ENCODE measurements at regions of chr1 and their contacts with region 1.

Region 1: GRCh38 chr1:179025125-179025974 is at the start of gene FAM20B:
- DNase-seq: peak; percentile 90
- ATAC-seq: peak; percentile 84
- H3K4me3 Mint-ChIP-seq: peak within 1 kb of the TSS; percentile 90
- H3K27ac Mint-ChIP-seq: peak within 1 kb of the TSS; percentile 90
- H3K4me1 Mint-ChIP-seq: peaks cover 43% of the 10 kb centered on the region
- H3K27me3 Mint-ChIP-seq: no peaks in the 10 kb centered on the region
- CTCF ChIP-seq: no peak
- total RNA-seq, gene FAM20B: 26.3 and 27.5 TPM in 2 replicates

Region 2: GRCh38 chr1:178093205-178093957 is 932.0 kb before region 1 on chr1:
- CTCF ChIA-PET with region 1: no interaction called
- POLR2A ChIA-PET with region 1: no interaction called
- intact Hi-C with region 1: loop called (anchors 5 kb)
- DNase-seq: peak; percentile 54
- ATAC-seq: peak; percentile 87
- H3K4me3 Mint-ChIP-seq: peak overlapping the region; percentile 83
- H3K27ac Mint-ChIP-seq: no peak overlapping the region
- H3K4me1 Mint-ChIP-seq: peaks cover 16% of the 10 kb centered on the region
- H3K27me3 Mint-ChIP-seq: peaks cover 70% of the 10 kb centered on the region
- CTCF ChIP-seq: no peak

Region 3: DNA sequence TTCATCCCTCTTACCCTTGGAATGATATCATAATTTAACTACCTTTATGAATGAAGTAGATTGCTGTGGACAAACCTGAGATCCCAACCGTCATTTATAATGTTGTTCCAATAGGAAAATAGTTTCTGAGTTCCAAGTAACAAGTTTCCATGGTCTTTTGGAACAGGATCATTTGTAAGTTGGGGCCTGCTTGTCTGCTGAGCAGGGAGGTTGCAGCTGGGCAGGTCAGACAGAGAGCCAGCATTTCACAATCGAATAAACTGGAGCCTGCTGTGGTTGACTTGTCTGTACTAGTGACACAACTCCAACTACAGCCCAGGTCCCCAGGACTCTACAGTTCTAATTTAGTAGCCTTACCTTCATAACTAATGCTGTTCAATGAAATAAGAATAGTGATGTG is 318.9 kb before region 1 on chr1:
- CTCF ChIA-PET with region 1: no interaction called
- POLR2A ChIA-PET with region 1: no interaction called
- intact Hi-C with region 1: no loop called
- DNase-seq: no peak
- ATAC-seq: no peak
- H3K4me3 Mint-ChIP-seq: no peak overlapping the region
- H3K27ac Mint-ChIP-seq: no peak overlapping the region
- H3K4me1 Mint-ChIP-seq: peaks cover 49% of the 10 kb centered on the region
- H3K27me3 Mint-ChIP-seq: no peaks in the 10 kb centered on the region
- CTCF ChIP-seq: no peak

Region 4: DNA sequence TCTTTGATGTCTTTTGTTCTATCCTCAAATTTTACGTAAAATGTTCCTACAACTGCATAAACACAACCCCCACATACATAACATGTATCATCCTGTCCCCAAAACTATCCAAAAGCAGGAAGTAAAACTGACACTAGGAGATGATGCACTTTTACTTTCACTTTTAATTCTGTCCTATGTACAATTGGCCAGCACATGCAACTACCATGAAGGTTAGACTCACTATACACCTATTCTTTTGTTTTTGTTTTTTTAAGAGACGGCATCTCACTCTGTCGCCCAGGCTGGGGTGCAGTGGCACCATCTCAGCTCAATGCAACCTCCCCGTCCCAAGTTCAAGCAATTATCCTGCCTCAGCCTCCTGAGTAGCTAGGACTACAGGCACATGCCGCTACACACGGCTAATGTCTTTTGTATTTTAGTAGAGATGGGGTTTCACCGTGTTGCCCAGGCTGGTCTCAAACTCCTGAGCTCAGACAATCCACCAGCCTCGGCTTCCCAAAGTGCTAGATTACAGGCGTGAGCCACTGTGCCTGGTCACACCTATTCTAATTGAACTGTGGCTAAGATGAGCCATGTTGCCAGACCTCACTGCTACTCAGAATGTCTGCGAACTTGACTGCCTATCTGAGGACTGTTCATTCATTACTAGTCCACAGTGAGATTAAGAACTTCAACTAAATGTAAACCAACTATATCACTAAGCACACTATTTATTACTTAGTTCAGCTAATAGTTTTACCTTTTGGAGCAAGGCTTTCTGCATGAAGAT is 104.5 kb after region 1 on chr1:
- CTCF ChIA-PET with region 1: no interaction called
- POLR2A ChIA-PET with region 1: no interaction called
- intact Hi-C with region 1: loop called (anchors 2 kb)
- DNase-seq: no peak
- ATAC-seq: peak; percentile 99
- H3K4me3 Mint-ChIP-seq: peak overlapping the region; percentile 45
- H3K27ac Mint-ChIP-seq: peak overlapping the region; percentile 79
- H3K4me1 Mint-ChIP-seq: peaks cover 13% of the 10 kb centered on the region
- H3K27me3 Mint-ChIP-seq: no peaks in the 10 kb centered on the region
- CTCF ChIP-seq: no peak

Region 5: GRCh38 chr1:179882243-179883039 is 857.1 kb after region 1 on chr1 and contains the start of gene TOR1AIP1:
- CTCF ChIA-PET with region 1: no interaction called
- POLR2A ChIA-PET with region 1: no interaction called
- intact Hi-C with region 1: loop called (anchors 1 kb)
- DNase-seq: peak; percentile 96
- ATAC-seq: peak; percentile 76
- H3K4me3 Mint-ChIP-seq: peak within 1 kb of the TSS; percentile 100
- H3K27ac Mint-ChIP-seq: peak within 1 kb of the TSS; percentile 100
- H3K4me1 Mint-ChIP-seq: peaks cover 64% of the 10 kb centered on the region
- H3K27me3 Mint-ChIP-seq: no peaks in the 10 kb centered on the region
- CTCF ChIP-seq: no peak
- total RNA-seq, gene TOR1AIP1: 42.3 and 46.6 TPM in 2 replicates